Natural killer cell (primary cell): ENCODE measurements at regions of chr5 and their contacts with region 1.

Region 1: DNA sequence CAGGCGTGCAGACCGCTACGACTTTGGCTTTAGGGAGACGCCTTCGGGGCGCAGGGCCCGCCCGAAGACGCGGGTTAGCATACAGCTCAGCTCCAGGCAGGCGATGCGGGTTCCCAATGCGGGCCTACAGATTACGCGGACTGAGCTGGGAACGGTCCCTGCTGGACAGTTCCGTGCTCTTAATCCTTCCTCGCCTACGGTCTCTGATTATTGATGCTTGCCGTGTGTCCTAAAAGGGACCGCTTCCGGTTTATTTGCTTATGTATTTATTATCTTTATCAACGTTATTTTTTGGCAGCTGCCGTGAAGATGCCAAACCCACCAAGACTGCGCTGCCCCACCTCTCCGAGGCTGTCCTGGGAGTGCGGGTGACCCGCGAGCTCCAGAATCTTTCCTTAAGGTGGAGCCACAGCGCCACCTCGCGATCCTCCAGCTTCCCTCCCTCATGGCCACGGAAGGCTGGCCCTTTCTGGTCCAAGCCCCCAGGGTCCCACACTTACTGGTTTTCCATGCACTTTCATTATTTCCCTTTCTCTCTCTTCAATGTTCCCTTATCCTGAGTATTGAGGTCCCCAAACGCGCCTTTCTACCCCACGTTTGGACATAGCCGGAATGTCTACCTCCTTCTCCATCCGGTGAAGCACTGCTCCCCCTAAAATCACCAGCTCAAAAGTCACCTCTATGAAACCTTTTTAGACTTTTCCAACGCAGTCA is 7.0 kb upstream of the EBF1 start:
- DNase-seq: peak; percentile 42 to 84
- ATAC-seq: peak; percentile 60 to 81 (median 72)
- H3K4me3 ChIP-seq: peak overlapping the region; percentile 16
- H3K4me3 Mint-ChIP-seq: peak overlapping the region; percentile 38
- H3K27ac ChIP-seq: no peak overlapping the region
- H3K27ac Mint-ChIP-seq: no peak overlapping the region
- H3K4me1 ChIP-seq: peaks cover 10% of the 10 kb centered on the region
- H3K4me1 Mint-ChIP-seq: peaks cover 14 to 20% of the 10 kb centered on the region in 2 donors
- H3K27me3 ChIP-seq: peaks cover 32% of the 10 kb centered on the region
- H3K27me3 Mint-ChIP-seq: peaks cover 57 to 84% of the 10 kb centered on the region in 2 donors
- CTCF ChIP-seq: peak; percentile 71

Region 2: DNA sequence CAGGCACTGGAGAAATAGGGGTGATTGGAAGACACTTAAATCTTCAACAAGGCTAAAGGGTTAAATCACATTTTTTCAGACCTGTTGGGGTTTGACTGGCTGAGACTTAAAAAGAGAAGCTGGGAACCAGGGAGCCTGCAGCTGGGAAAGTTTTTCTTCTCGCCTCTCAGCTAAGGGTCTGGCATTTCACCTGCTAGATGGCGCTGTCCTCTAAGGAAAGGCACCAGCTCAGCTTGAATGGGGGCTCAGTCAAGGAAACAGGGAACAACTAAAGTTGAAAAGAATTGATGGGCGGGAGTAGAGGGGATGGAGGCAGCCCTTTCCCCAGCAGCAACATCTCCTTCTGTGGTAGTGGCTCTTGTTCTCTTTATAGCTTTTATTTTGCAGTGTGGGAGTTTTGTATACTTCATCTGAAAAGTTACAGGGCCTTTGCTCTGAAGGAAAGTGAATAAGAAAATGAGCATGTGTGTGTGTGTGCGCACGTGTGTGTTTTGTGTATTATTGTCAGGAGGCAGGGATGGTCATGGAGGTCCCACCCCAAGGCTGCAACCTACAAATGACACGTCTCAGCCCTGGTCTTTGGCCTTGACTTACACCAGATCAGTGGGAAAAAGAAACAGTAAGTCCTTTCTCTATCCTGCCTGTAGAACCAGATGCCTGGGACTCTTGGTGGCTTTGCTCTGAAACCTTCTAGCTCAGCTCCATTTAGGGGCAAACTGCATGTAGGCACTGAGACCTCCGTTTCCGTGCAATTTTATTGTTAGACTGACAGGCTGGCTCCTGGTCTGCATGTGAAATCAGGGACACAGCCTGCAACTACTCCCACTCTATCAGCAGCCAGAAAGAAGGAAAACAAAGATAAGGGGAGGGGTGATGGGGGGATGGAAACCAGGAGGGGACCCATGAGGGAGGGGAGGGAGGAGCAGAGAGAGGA is 931.5 kb before region 1 on chr5:
- intact Hi-C with region 1: loop called (anchors 10 kb)
- DNase-seq: peak in 1 of 2 donors; percentile 71
- ATAC-seq: peak in 2 of 3 donors; percentile 49 to 55
- H3K4me3 ChIP-seq: no peak overlapping the region
- H3K4me3 Mint-ChIP-seq: no peak overlapping the region
- H3K27ac ChIP-seq: no peak overlapping the region
- H3K27ac Mint-ChIP-seq: no peak overlapping the region
- H3K4me1 ChIP-seq: no peaks in the 10 kb centered on the region
- H3K4me1 Mint-ChIP-seq: no peaks in the 10 kb centered on the region
- H3K27me3 ChIP-seq: no peaks in the 10 kb centered on the region
- H3K27me3 Mint-ChIP-seq: peaks cover 4 to 9% of the 10 kb centered on the region in 2 donors
- CTCF ChIP-seq: no peak

Region 3: DNA sequence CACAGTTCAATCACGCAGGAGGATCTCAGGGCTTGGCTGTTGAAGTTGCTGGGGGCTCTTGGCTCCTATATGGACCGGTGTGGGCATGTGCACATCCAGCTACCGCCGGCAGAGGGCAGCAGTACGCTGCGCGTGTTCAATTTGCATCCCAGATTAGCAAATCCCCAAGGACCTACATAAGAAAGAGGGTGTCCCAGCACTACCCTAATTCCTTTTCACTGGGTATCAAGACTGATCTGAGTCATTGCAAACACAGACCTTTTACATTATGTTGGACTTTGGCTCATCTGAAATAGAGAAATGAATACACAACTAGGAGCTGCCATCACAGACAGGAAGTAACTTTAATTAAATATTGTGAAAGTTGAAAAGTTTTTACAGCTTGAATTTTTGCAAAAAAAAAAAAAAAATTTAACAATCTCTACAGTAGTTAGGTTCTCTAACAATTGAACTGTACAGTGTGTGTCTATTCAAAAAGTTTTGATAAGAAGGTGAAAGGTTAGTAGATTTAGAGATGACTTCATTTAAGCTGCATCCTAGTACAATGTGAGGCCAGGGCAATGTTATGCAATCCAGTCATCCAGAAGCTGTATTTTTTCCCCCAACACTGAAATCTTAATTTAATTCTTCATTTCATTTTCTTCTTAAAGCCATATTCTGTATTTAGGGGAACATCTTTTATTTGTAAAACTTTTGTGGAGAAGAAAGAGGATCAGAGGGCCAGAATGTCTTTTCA is 411.0 kb before region 1 on chr5:
- intact Hi-C with region 1: loop called (anchors 1 kb)
- DNase-seq: peak; percentile 59 to 82
- ATAC-seq: peak; percentile 72 to 96 (median 83)
- H3K4me3 ChIP-seq: no peak overlapping the region
- H3K4me3 Mint-ChIP-seq: no peak overlapping the region
- H3K27ac ChIP-seq: no peak overlapping the region
- H3K27ac Mint-ChIP-seq: no peak overlapping the region
- H3K4me1 ChIP-seq: no peaks in the 10 kb centered on the region
- H3K4me1 Mint-ChIP-seq: peaks cover 0 to 4% of the 10 kb centered on the region in 2 donors
- H3K27me3 ChIP-seq: no peaks in the 10 kb centered on the region
- H3K27me3 Mint-ChIP-seq: peaks cover 7 to 16% of the 10 kb centered on the region in 2 donors
- CTCF ChIP-seq: peak; percentile 97